A673 (cell line): ENCODE measurements at regions of chr11 and their contacts with region 1.

Region 1: GRCh38 chr11:119334174-119334930 is at the start of gene RNF26:
- DNase-seq: peak; percentile 100
- H3K4me3 ChIP-seq: peak within 1 kb of the TSS; percentile 76
- H3K27ac ChIP-seq: peak within 1 kb of the TSS; percentile 91
- H3K4me1 ChIP-seq: peaks cover 39% of the 10 kb centered on the region
- H3K27me3 ChIP-seq: no peaks in the 10 kb centered on the region
- CTCF ChIP-seq: no peak
- total RNA-seq, gene RNF26: 81.3 and 89.3 TPM in 2 replicates

Region 2: GRCh38 chr11:119266517-119267255 is 67.7 kb before region 1 on chr11:
- CTCF ChIA-PET with region 1: interaction called, 10 read pairs
- POLR2A ChIA-PET with region 1: no interaction called
- intact Hi-C with region 1: no loop called
- DNase-seq: no peak
- H3K4me3 ChIP-seq: no peak overlapping the region
- H3K27ac ChIP-seq: no peak overlapping the region
- H3K4me1 ChIP-seq: peaks cover 7% of the 10 kb centered on the region
- H3K27me3 ChIP-seq: no peaks in the 10 kb centered on the region
- CTCF ChIP-seq: no peak

Region 3: DNA sequence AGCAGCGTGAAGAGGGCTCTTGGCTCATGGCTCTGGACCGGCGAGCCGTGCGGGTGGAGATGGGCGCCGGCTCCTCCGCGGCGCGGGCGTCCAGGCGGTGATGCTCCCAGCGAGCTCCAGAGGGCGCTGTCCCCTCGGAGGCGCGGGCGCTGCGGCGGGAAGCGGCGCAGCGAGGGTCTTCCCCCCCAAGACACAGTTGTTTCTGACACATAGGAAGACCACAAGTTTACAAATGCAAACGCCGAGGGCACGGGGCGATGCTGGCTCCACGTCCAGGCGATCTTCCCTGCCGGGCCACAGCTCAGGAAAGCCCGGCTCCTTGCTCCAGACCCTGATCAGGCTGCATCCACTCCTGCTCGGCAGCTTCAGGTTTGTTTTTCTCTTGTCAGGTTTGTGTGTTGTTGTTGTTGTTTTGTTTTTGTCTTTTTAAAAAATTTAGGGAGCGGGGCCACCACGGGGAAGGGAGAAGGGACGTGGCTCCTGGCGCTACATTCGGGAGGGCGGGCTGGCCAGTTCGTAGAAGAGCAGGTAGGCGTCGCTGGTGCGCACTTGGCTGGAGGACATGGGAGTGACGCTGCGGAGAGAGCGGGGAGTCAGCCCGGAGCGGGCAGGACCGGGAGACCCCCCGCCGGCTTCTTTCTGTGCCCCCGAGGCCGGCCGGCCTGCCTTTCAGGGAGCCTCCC is 22.1 kb after region 1 on chr11:
- CTCF ChIA-PET with region 1: interaction called, 23 read pairs
- POLR2A ChIA-PET with region 1: interaction called, 24 read pairs
- intact Hi-C with region 1: no loop called
- DNase-seq: peak; percentile 93
- H3K4me3 ChIP-seq: peak overlapping the region; percentile 64
- H3K27ac ChIP-seq: peak overlapping the region; percentile 79
- H3K4me1 ChIP-seq: peaks cover 9% of the 10 kb centered on the region
- H3K27me3 ChIP-seq: no peaks in the 10 kb centered on the region
- CTCF ChIP-seq: peak; percentile 95

Region 4: GRCh38 chr11:119381181-119381988 is 47.0 kb after region 1 on chr11 and contains the start of gene USP2:
- CTCF ChIA-PET with region 1: interaction called, 29 read pairs
- POLR2A ChIA-PET with region 1: no interaction called
- intact Hi-C with region 1: loop called (anchors 5 kb)
- DNase-seq: peak; percentile 98
- H3K4me3 ChIP-seq: peak within 1 kb of the TSS; percentile 53
- H3K27ac ChIP-seq: peak within 1 kb of the TSS; percentile 44
- H3K4me1 ChIP-seq: peaks cover 6% of the 10 kb centered on the region
- H3K27me3 ChIP-seq: no peaks in the 10 kb centered on the region
- CTCF ChIP-seq: peak; percentile 100
- total RNA-seq, gene USP2: 4.8 and 6.2 TPM in 2 replicates

Region 5: DNA sequence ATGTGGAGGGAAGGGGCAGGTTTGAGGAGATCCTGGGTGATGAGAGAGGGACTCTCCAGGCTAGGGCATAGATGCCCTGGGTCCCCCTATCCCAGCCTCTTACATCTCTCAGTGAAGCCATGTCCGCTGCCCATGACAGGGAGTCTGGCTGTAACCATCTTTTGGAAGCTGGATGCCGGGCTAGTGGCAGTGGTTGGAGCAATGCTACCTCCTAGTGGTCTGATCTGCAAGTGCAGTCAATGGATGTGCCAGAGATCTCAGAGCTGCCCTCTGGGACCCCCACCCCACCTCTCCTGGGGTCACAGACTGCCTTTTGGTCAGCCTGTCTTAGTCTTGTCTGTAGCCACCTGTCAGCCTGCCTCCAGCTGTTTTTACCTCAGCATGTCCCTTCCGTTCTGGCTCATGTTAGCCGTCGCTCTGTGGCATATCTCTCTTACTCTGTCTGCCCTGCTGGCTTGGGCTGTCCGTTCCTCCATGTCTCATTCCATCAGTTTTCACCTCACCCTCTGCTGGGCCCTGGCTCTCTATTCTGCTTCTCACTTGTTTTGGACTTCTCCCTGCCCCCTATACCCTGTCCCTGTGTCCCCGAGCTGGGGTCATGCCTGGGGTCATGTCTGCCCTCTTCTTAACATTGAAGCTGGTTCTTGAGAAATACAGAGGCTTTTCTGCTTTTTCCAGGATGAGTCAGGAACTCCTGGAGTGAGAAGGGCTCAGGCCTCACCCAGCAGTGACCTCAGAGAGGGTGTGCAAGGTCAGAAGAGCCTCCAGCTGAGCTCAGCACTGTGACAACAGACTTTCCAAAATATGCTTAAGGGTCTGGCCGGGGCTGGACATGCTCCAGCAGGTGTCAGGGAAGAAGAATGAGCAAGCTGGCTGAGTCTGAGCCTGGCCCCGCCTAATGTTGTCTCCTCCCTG is 140.6 kb after region 1 on chr11:
- CTCF ChIA-PET with region 1: interaction called, 40 read pairs
- POLR2A ChIA-PET with region 1: no interaction called
- intact Hi-C with region 1: no loop called
- DNase-seq: peak; percentile 79
- H3K4me3 ChIP-seq: no peak overlapping the region
- H3K27ac ChIP-seq: no peak overlapping the region
- H3K4me1 ChIP-seq: no peaks in the 10 kb centered on the region
- H3K27me3 ChIP-seq: no peaks in the 10 kb centered on the region
- CTCF ChIP-seq: peak; percentile 95